CD8-positive, alpha-beta T cell (primary cell): ENCODE measurements at regions of chr15 and their contacts with region 1.

Region 1: DNA sequence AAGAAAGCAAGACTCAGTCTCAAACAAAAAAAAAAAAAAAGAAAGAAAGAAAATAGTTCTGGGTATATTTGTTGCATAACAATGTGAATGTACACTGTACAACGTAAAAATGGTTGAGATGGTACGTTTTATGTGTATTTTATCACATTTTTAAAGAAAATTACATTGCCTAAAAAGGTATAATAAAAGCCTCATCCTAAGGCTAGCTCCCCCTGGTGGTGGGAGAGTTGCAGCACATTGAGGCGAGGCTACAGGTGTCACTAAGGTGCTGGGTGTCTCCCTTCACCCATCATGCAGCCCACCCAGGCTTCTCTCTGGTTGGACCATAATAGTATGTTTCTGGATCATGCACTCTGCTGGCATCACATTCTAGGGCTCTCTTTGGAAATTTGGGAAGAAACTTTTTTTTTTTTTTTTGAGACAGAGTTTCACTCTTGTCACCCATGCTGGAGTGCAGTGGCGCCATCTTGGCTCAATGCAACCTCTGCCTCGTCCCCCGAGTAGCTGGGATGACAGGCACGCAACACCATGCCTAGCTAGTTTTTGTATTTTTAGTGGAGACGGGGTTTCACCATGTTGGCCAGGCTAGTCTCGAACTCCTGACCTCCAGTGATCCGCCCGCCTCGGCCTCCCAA is 12.4 kb upstream of the RAB11A start:
- DNase-seq: peak; percentile 59 to 88 (median 84)
- ATAC-seq: peak; percentile 87
- H3K4me3 ChIP-seq: no peak overlapping the region
- H3K4me3 Mint-ChIP-seq: no peak overlapping the region
- H3K27ac ChIP-seq: no peak overlapping the region
- H3K27ac Mint-ChIP-seq: no peak overlapping the region
- H3K4me1 ChIP-seq: no peaks in the 10 kb centered on the region
- H3K4me1 Mint-ChIP-seq: peaks cover 11% of the 10 kb centered on the region
- H3K27me3 ChIP-seq: no peaks in the 10 kb centered on the region
- H3K27me3 Mint-ChIP-seq: no peaks in the 10 kb centered on the region
- CTCF ChIP-seq: peak; percentile 80

Region 2: GRCh38 chr15:65595960-65596359 is 261.0 kb before region 1 on chr15:
- CTCF ChIA-PET with region 1: interaction called, 4 read pairs
- POLR2A ChIA-PET with region 1: no interaction called
- intact Hi-C with region 1: loop called in 1 of 2 experiments (anchors 5 kb)
- DNase-seq: peak in 4 of 9 experiments; percentile 15 to 56 (median 36)
- ATAC-seq: no peak
- H3K4me3 ChIP-seq: no peak overlapping the region
- H3K4me3 Mint-ChIP-seq: no peak overlapping the region
- H3K27ac ChIP-seq: no peak overlapping the region
- H3K27ac Mint-ChIP-seq: no peak overlapping the region
- H3K4me1 ChIP-seq: no peaks in the 10 kb centered on the region
- H3K4me1 Mint-ChIP-seq: no peaks in the 10 kb centered on the region
- H3K27me3 ChIP-seq: no peaks in the 10 kb centered on the region
- H3K27me3 Mint-ChIP-seq: no peaks in the 10 kb centered on the region
- CTCF ChIP-seq: peak; percentile 36

Region 3: GRCh38 chr15:65757256-65757655 is 99.7 kb before region 1 on chr15:
- CTCF ChIA-PET with region 1: interaction called, 3 read pairs
- POLR2A ChIA-PET with region 1: no interaction called
- intact Hi-C with region 1: loop called in 1 of 2 experiments (anchors 5 kb)
- DNase-seq: no peak
- ATAC-seq: no peak
- H3K4me3 ChIP-seq: no peak overlapping the region
- H3K4me3 Mint-ChIP-seq: no peak overlapping the region
- H3K27ac ChIP-seq: no peak overlapping the region
- H3K27ac Mint-ChIP-seq: no peak overlapping the region
- H3K4me1 ChIP-seq: peaks cover 5% of the 10 kb centered on the region
- H3K4me1 Mint-ChIP-seq: peaks cover 33% of the 10 kb centered on the region
- H3K27me3 ChIP-seq: no peaks in the 10 kb centered on the region
- H3K27me3 Mint-ChIP-seq: no peaks in the 10 kb centered on the region
- CTCF ChIP-seq: no peak

Region 4: DNA sequence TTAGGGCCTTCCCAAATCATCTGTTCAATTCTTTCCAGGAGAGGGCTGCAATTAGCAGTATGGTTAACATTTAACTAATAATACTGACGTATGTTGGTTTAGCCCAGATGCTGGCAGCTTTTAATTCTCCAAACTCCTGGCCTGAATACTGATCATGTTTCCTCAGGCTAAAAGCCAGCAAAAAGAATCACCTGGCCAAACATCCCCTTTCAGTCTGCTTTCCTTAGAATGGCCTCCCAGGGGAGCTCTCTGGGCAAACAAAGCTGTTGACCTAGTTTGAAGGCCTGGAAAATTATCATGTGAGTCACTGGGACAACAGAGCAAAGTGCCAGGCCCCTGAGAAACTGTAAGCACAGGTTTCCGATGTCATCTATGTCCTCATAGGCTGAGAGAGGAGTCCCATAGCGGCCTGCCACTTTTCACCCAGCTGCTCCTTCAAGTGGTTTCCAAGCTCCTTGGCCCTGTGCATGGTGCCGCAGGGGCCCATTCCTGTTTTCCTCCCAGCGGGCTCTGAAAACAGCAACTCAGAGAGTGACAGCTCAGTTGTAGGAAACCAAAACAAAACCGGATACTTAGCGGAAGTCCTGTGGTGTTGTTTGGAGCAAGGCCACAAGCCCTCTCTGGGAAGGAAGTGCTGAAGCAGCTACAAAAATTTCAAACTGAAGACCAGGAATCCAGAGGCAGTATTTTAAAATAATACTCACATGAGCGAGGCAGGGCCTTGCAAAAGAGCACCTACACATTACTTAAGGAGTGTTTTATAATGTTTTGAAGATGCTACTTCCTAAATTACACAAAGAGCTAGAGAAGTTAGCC is 24.2 kb before region 1 on chr15:
- CTCF ChIA-PET with region 1: interaction called, 38 read pairs
- POLR2A ChIA-PET with region 1: no interaction called
- intact Hi-C with region 1: loop called in 1 of 2 experiments (anchors 2 kb)
- DNase-seq: peak; percentile 12 to 81 (median 55)
- ATAC-seq: peak; percentile 40
- H3K4me3 ChIP-seq: peak overlapping the region; percentile 2 to 18
- H3K4me3 Mint-ChIP-seq: peak overlapping the region; percentile 75
- H3K27ac ChIP-seq: peak overlapping the region; percentile 39 to 89
- H3K27ac Mint-ChIP-seq: peak overlapping the region; percentile 94
- H3K4me1 ChIP-seq: peaks cover 52% of the 10 kb centered on the region
- H3K4me1 Mint-ChIP-seq: peaks cover 57% of the 10 kb centered on the region
- H3K27me3 ChIP-seq: no peaks in the 10 kb centered on the region
- H3K27me3 Mint-ChIP-seq: no peaks in the 10 kb centered on the region
- CTCF ChIP-seq: no peak

Region 5: DNA sequence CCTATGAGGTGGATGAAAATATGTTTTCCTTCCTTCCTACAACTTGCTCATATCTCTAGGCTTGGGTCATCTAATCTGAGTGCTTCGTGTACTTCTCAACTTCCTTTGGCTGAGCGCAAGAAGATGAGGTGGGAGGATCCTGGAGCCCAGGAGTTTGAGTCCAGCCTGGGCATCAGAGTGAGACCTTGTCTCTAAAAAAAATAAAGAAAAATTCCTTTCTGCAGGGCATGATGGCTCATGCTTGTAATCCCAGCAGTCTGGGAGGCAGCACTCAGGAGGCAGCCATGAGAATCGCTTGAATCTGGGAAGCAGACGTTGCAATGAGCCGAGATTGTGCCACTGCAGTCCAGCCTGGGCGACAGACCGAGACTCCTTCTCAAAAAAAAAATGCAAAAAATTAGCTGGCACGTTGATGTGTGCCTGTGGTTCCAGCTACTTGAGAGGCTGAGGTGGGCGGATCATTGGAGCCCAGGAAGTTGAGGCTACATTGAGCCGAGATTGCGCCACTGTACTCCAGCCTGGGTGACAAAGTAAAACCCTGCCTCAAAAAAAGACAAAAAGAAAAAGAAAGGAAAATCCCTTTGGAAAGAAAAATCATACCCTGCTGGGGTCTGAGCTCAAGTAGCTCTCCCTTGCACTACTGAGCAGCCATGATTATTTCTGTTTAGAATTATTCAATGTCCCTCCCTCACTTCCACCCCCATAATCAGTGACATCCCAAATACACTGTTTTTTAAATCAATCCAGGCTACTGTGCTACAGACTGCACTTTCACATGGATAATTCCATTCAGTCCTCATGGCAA is 15.6 kb before region 1 on chr15:
- CTCF ChIA-PET with region 1: interaction called, 38 read pairs
- POLR2A ChIA-PET with region 1: no interaction called
- intact Hi-C with region 1: no loop called
- DNase-seq: no peak
- ATAC-seq: no peak
- H3K4me3 ChIP-seq: no peak overlapping the region
- H3K4me3 Mint-ChIP-seq: no peak overlapping the region
- H3K27ac ChIP-seq: no peak overlapping the region
- H3K27ac Mint-ChIP-seq: no peak overlapping the region
- H3K4me1 ChIP-seq: no peaks in the 10 kb centered on the region
- H3K4me1 Mint-ChIP-seq: no peaks in the 10 kb centered on the region
- H3K27me3 ChIP-seq: no peaks in the 10 kb centered on the region
- H3K27me3 Mint-ChIP-seq: no peaks in the 10 kb centered on the region
- CTCF ChIP-seq: no peak

Region 6: GRCh38 chr15:65881766-65882434 is 25.0 kb after region 1 on chr15:
- CTCF ChIA-PET with region 1: no interaction called
- POLR2A ChIA-PET with region 1: no interaction called
- intact Hi-C with region 1: no loop called
- DNase-seq: peak in 1 of 9 experiments; percentile 23
- ATAC-seq: peak; percentile 31
- H3K4me3 ChIP-seq: no peak overlapping the region
- H3K4me3 Mint-ChIP-seq: peak overlapping the region; percentile 56
- H3K27ac ChIP-seq: peak overlapping the region in 1 of 2 experiments; percentile 33
- H3K27ac Mint-ChIP-seq: peak overlapping the region; percentile 66
- H3K4me1 ChIP-seq: peaks cover 37% of the 10 kb centered on the region
- H3K4me1 Mint-ChIP-seq: peaks cover 57% of the 10 kb centered on the region
- H3K27me3 ChIP-seq: no peaks in the 10 kb centered on the region
- H3K27me3 Mint-ChIP-seq: no peaks in the 10 kb centered on the region
- CTCF ChIP-seq: no peak

Region 7: GRCh38 chr15:66188464-66188863 is 331.5 kb after region 1 on chr15:
- CTCF ChIA-PET with region 1: no interaction called
- POLR2A ChIA-PET with region 1: no interaction called
- intact Hi-C with region 1: no loop called
- DNase-seq: no peak
- ATAC-seq: no peak
- H3K4me3 ChIP-seq: no peak overlapping the region
- H3K4me3 Mint-ChIP-seq: no peak overlapping the region
- H3K27ac ChIP-seq: no peak overlapping the region
- H3K27ac Mint-ChIP-seq: no peak overlapping the region
- H3K4me1 ChIP-seq: no peaks in the 10 kb centered on the region
- H3K4me1 Mint-ChIP-seq: no peaks in the 10 kb centered on the region
- H3K27me3 ChIP-seq: peaks cover 0 to 2% of the 10 kb centered on the region in 2 experiments
- H3K27me3 Mint-ChIP-seq: peaks cover 35% of the 10 kb centered on the region
- CTCF ChIP-seq: no peak